K562 (cell line): ENCODE measurements at regions of chr15 and their contacts with region 1.

Region 1: GRCh38 chr15:45402162-45402954 is 24.0 kb upstream of the GATM start:
- DNase-seq: peak; percentile 96 to 99 (median 98)
- ATAC-seq: peak; percentile 94
- H3K4me3 ChIP-seq: peak overlapping the region; percentile 94
- H3K27ac ChIP-seq: peak overlapping the region; percentile 88
- H3K4me1 ChIP-seq: peaks cover 11 to 12% of the 10 kb centered on the region in 2 experiments; a peak in 2 of 5 replicates
- H3K27me3 ChIP-seq: no peaks in the 10 kb centered on the region
- CTCF ChIP-seq: no peak
- EP300 ChIP-seq: 0 out of 2 replicates have a peak, but pooled peaks have one; percentile 14
- POLR2A ChIP-seq: peak; percentile 94
- RAD21 ChIP-seq: no peak

Region 2: DNA sequence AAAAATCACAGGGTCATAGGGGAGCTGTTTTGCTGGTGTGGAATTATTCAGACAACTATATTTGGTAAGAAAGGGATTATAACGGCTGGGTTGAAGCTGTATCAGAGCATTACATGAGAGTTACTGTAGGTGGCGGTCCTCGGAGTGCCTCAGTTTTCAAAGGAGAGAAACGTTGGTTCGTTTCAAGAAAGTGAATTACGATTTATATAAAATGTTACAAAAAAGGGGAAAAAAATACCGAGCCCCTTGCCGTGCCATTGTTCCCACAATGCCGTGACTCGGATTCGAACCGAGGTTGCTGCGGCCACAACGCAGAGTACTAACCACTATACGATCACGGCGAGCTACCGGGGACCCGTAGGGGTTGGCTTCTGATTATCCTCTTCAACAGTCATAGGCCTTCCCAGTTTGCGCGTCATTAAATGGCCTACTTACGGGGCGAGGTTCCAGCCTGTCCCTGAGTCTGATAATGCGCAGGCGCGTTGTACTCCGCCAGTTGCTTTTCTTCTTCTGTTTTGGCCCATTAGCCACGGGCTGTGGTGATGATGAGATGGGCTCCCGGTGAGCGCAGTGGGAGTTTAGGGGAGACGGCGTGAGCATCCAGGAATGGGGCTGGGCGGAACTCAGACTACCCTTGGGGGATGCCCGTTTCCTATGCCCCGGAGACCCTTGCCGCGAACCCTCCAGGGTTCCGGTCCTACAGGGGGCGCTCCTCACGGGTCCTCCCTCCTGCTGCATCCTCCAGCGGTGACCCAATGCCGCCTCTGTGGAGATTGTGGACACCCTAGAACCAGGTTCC is 203.8 kb before region 1 on chr15:
- CTCF ChIA-PET with region 1: no interaction called
- POLR2A ChIA-PET with region 1: no interaction called
- in situ Hi-C with region 1: no loop called
- intact Hi-C with region 1: loop called (anchors 2 kb)
- DNase-seq: peak; percentile 77 to 94 (median 81)
- ATAC-seq: peak; percentile 76
- H3K4me3 ChIP-seq: peak overlapping the region; percentile 79
- H3K27ac ChIP-seq: peak overlapping the region; percentile 92
- H3K4me1 ChIP-seq: peaks cover 0 to 2% of the 10 kb centered on the region in 2 experiments; a peak in 2 of 5 replicates
- H3K27me3 ChIP-seq: no peaks in the 10 kb centered on the region
- CTCF ChIP-seq: peak; percentile 72 to 89 (median 81)
- EP300 ChIP-seq: peak; percentile 45; the same call in 1 of the 2 replicates
- POLR2A ChIP-seq: peak; percentile 76
- RAD21 ChIP-seq: peak in 1 of 2 experiments; percentile 26; a peak in 2 of 4 replicates

Region 3: DNA sequence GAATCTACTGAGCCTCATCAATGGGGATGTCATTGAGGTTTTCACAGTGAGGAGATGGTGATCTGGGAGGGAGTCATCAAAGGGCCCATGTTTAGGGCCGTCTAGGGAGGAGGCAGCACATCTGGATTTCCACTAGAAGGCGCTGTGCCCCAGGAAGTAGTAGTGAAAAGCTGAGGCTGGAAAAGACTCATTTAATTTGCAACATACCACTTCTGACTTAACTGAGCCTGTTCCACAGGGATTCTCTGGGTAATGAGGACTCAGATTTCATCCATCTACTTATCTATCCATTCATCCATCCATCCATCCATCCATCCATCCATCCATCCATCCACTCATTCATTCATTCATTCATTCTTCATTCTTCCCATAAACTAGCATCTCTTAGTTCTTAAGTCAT is 197.2 kb before region 1 on chr15:
- CTCF ChIA-PET with region 1: no interaction called
- POLR2A ChIA-PET with region 1: interaction called, 3 read pairs
- in situ Hi-C with region 1: no loop called
- intact Hi-C with region 1: loop called (anchors 1 kb)
- DNase-seq: peak; percentile 45 to 79 (median 62)
- ATAC-seq: peak; percentile 68
- H3K4me3 ChIP-seq: no peak overlapping the region
- H3K27ac ChIP-seq: no peak overlapping the region
- H3K4me1 ChIP-seq: peaks cover 0 to 2% of the 10 kb centered on the region in 2 experiments; a peak in 2 of 5 replicates
- H3K27me3 ChIP-seq: peaks cover 2 to 4% of the 10 kb centered on the region in 2 experiments; a peak in 1 of 5 replicates
- CTCF ChIP-seq: peak; percentile 89 to 97 (median 95)
- EP300 ChIP-seq: no peak
- POLR2A ChIP-seq: no peak
- RAD21 ChIP-seq: peak; percentile 70 to 86

Region 4: DNA sequence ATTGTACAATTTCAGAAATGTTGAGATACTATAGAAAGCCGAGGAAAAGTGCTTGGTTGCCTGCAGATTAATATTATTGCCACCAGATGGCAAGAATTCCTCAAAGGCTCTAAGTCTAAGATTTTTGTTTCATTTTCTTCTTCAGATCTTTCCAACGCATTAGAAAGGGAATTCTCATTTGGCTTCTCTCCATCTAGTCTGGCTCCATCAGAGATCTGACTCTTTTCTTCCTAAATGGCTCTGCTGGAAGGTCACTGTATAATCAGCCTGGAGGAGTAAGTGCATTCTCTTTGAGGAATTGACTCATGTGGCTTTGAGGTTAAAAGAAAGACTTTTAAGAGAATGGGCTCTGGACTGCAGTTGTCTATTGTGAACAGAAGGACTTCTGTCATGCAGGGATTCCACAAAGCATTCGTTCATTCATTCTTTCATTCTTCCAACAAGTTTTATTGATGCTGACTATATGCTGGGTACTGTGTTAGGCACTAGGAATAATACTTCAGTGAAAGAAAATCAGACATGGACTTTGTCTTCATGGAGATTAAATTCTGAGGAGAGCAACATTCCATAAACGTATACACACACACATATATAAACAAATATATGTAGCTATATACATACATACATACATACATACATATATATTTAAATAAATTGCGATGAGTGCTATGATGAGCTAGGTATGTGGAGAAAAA is 95.0 kb before region 1 on chr15:
- CTCF ChIA-PET with region 1: interaction called, 4 read pairs
- POLR2A ChIA-PET with region 1: no interaction called
- in situ Hi-C with region 1: no loop called
- intact Hi-C with region 1: loop called (anchors 2 kb)
- DNase-seq: peak in 1 of 4 experiments; percentile 6
- ATAC-seq: peak; percentile 39; the same call in 1 of the 3 replicates
- H3K4me3 ChIP-seq: no peak overlapping the region
- H3K27ac ChIP-seq: no peak overlapping the region
- H3K4me1 ChIP-seq: no peaks in the 10 kb centered on the region
- H3K27me3 ChIP-seq: peaks cover 0 to 3% of the 10 kb centered on the region in 2 experiments; a peak in 4 of 5 replicates
- CTCF ChIP-seq: peak; percentile 23 to 53 (median 34); a peak in 3 of 6 replicates
- EP300 ChIP-seq: no peak
- POLR2A ChIP-seq: no peak
- RAD21 ChIP-seq: peak; percentile 40 to 60

Region 5: GRCh38 chr15:45314960-45315359 is 87.4 kb before region 1 on chr15:
- CTCF ChIA-PET with region 1: interaction called, 4 read pairs
- POLR2A ChIA-PET with region 1: no interaction called
- in situ Hi-C with region 1: no loop called
- intact Hi-C with region 1: loop called (anchors 1 kb)
- DNase-seq: peak in 2 of 4 experiments; percentile 18 to 69
- ATAC-seq: peak; percentile 95
- H3K4me3 ChIP-seq: no peak overlapping the region
- H3K27ac ChIP-seq: no peak overlapping the region
- H3K4me1 ChIP-seq: no peaks in the 10 kb centered on the region; a peak in 1 of 5 replicates
- H3K27me3 ChIP-seq: no peaks in the 10 kb centered on the region; a peak in 2 of 5 replicates
- CTCF ChIP-seq: peak; percentile 40 to 52 (median 43); a peak in 5 of 6 replicates
- EP300 ChIP-seq: no peak
- POLR2A ChIP-seq: no peak
- RAD21 ChIP-seq: peak in 1 of 2 experiments; percentile 42; a peak in 2 of 4 replicates

Region 6: DNA sequence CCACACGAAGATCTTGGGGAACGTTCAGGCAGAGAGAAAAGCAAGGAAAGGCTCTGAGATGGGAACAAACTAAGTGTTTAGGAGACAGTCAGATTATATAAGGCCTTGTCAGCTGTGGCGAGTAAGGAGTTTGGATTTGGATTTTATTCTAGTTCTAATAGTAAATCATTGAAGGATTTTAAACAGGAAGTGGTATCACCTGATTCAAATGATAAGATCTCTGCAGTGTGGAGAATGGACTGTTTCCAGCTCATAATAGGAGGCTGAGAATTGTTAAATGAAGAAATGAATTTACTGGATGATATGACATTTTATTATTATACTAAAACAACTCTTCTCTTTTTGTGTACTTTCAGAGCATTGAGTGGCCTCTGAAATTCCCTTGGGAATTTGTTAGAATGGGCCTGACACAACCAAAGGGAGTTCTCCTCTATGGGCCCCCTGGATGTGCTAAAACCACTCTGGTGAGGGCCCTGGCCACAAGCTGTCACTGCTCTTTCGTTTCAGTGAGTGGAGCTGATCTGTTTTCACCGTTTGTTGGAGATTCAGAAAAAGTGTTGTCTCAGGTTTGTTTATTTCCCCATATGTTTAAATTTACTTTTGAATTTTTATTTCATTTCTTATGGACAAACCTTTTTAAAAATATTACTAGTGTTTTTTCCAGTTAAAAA is 12.0 kb after region 1 on chr15:
- CTCF ChIA-PET with region 1: no interaction called
- POLR2A ChIA-PET with region 1: interaction called, 11 read pairs
- in situ Hi-C with region 1: no loop called
- intact Hi-C with region 1: no loop called
- DNase-seq: no peak
- ATAC-seq: no peak
- H3K4me3 ChIP-seq: no peak overlapping the region
- H3K27ac ChIP-seq: no peak overlapping the region
- H3K4me1 ChIP-seq: peaks cover 0 to 13% of the 10 kb centered on the region in 2 experiments; a peak in 3 of 5 replicates
- H3K27me3 ChIP-seq: no peaks in the 10 kb centered on the region
- CTCF ChIP-seq: no peak
- EP300 ChIP-seq: no peak
- POLR2A ChIP-seq: no peak
- RAD21 ChIP-seq: no peak